Mammary epithelial cell (primary cell): ENCODE measurements at regions of chr1 and their contacts with region 1.

Region 1: DNA sequence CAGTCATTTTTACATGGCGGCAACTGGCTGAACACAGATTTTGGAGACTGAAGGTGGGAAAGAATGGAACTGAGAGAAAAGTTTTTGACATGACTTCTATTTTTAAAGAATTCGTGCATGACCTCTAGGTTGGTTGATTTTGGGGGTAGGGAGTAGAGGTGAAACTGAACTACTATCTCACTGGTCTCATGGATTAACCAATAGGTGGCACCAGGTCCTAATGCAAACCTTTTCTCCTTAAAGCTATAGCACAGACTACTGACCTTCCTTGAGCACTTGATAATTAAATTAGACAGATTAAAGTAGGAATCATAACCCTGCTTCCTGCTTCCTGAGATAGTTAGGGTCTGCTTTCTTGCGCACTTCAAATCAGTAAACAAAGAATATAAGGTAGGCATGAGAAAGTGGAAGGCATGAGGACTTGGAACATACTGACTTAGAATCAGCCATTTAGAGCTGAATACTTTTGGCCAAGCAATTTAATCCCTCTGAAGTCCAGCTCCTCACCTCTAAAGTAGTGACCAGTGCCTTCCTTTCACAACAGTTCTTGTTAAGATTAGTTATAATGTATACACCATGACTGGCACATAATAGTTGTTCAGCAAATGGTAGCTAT is 206.0 kb downstream of the CENPF start:
- DNase-seq: peak; percentile 40
- H3K4me3 ChIP-seq: no peak overlapping the region
- H3K27ac ChIP-seq: no peak overlapping the region
- H3K4me1 ChIP-seq: no peaks in the 10 kb centered on the region
- H3K27me3 ChIP-seq: no peaks in the 10 kb centered on the region
- CTCF ChIP-seq: peak; percentile 48 to 71

Region 2: GRCh38 chr1:214439352-214440119 is 369.4 kb before region 1 on chr1:
- CTCF ChIA-PET with region 1: no interaction called
- dilution Hi-C with region 1: no loop called
- in situ Hi-C with region 1: no loop called
- intact Hi-C with region 1: no loop called
- DNase-seq: peak; percentile 99
- H3K4me3 ChIP-seq: peak overlapping the region in 2 of 3 experiments; percentile 7 to 28
- H3K27ac ChIP-seq: peak overlapping the region; percentile 100
- H3K4me1 ChIP-seq: peaks cover 55% of the 10 kb centered on the region
- H3K27me3 ChIP-seq: no peaks in the 10 kb centered on the region
- CTCF ChIP-seq: no peak

Region 3: GRCh38 chr1:214660862-214661261 is 148.1 kb before region 1 on chr1:
- CTCF ChIA-PET with region 1: no interaction called
- dilution Hi-C with region 1: no loop called
- in situ Hi-C with region 1: no loop called
- intact Hi-C with region 1: loop called (anchors 1 kb)
- DNase-seq: no peak
- H3K4me3 ChIP-seq: no peak overlapping the region
- H3K27ac ChIP-seq: no peak overlapping the region
- H3K4me1 ChIP-seq: no peaks in the 10 kb centered on the region
- H3K27me3 ChIP-seq: no peaks in the 10 kb centered on the region
- CTCF ChIP-seq: peak; percentile 52 to 67

Region 4: GRCh38 chr1:215076318-215076717 is 267.4 kb after region 1 on chr1:
- CTCF ChIA-PET with region 1: interaction called, 5 read pairs
- dilution Hi-C with region 1: no loop called
- in situ Hi-C with region 1: no loop called
- intact Hi-C with region 1: loop called (anchors 1 kb)
- DNase-seq: peak; percentile 50
- H3K4me3 ChIP-seq: no peak overlapping the region
- H3K27ac ChIP-seq: no peak overlapping the region
- H3K4me1 ChIP-seq: no peaks in the 10 kb centered on the region
- H3K27me3 ChIP-seq: no peaks in the 10 kb centered on the region
- CTCF ChIP-seq: peak; percentile 49 to 72

Region 5: GRCh38 chr1:215114154-215114933 is 305.4 kb after region 1 on chr1:
- CTCF ChIA-PET with region 1: no interaction called
- dilution Hi-C with region 1: loop called (anchors 25 kb)
- in situ Hi-C with region 1: no loop called
- intact Hi-C with region 1: no loop called
- DNase-seq: peak; percentile 81
- H3K4me3 ChIP-seq: no peak overlapping the region
- H3K27ac ChIP-seq: peak overlapping the region; percentile 37
- H3K4me1 ChIP-seq: peaks cover 17% of the 10 kb centered on the region
- H3K27me3 ChIP-seq: no peaks in the 10 kb centered on the region
- CTCF ChIP-seq: no peak

Region 6: GRCh38 chr1:215146341-215146826 is 337.4 kb after region 1 on chr1:
- CTCF ChIA-PET with region 1: interaction called, 4 read pairs
- dilution Hi-C with region 1: no loop called
- in situ Hi-C with region 1: loop called (anchors 5 kb)
- intact Hi-C with region 1: loop called (anchors 1 kb)
- DNase-seq: peak; percentile 10
- H3K4me3 ChIP-seq: no peak overlapping the region
- H3K27ac ChIP-seq: no peak overlapping the region
- H3K4me1 ChIP-seq: no peaks in the 10 kb centered on the region
- H3K27me3 ChIP-seq: no peaks in the 10 kb centered on the region
- CTCF ChIP-seq: peak; percentile 67 to 71